Esophagus muscularis mucosa (tissue), 4 donors: ENCODE measurements at regions of chr4 and their contacts with region 1.

Region 1: GRCh38 chr4:122932763-122933162 is 10.4 kb upstream of the NUDT6 start:
- DNase-seq: no peak
- H3K4me3 ChIP-seq: no peak overlapping the region
- H3K27ac ChIP-seq: no peak overlapping the region
- H3K4me1 ChIP-seq: no peaks in the 10 kb centered on the region
- H3K27me3 ChIP-seq: no peaks in the 10 kb centered on the region
- CTCF ChIP-seq: no peak
- EP300 ChIP-seq: no peak
- POLR2A ChIP-seq: no peak

Region 2: DNA sequence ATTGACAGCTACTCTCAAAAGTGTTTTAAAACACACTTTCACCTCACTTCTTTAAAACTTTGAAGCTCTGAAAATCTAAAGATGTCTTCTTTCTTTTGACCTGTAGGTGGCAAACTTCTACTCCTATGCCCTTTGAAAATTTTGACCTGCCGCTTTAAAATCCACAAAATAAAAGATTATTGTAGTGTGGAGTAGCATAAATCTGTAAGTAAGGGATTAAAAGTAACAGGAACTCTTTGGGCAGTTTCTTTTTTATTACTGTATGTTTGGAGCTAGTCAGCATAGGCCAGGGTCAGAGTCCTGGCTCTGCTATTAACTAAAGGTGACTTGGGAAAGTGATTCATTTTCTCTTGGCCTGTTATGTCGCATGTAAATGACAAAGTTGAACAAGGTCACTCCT is 174.7 kb before region 1 on chr4:
- intact Hi-C with region 1: loop called (anchors 2 kb)
- DNase-seq: no peak
- H3K4me3 ChIP-seq: no peak overlapping the region
- H3K27ac ChIP-seq: no peak overlapping the region
- H3K4me1 ChIP-seq: peaks cover 4 to 7% (median 4%) of the 10 kb centered on the region in 4 donors
- H3K27me3 ChIP-seq: no peaks in the 10 kb centered on the region
- CTCF ChIP-seq: peak; percentile 63 to 77 (median 73)
- EP300 ChIP-seq: no peak
- POLR2A ChIP-seq: no peak

Region 3: DNA sequence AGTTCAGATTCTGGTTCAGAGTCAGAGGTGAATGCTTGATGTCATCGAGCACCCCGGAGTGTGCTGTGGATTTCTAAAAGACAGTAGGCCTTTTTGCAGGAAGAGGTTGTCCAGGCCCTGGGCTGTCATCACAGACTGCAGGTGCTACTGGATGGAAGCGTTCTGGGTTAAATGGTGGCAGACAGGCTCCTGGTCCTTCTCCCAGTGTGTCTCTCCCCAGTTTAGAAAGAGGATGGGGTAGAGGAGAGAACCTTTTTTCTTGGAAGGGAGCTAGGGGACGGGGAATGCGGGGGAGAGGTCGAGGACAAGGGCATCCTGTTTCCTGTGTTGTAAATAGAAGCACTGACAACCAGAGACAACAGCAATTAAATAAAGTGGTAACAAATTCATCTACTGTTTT is 91.9 kb after region 1 on chr4:
- intact Hi-C with region 1: no loop called
- DNase-seq: no peak
- H3K4me3 ChIP-seq: no peak overlapping the region
- H3K27ac ChIP-seq: no peak overlapping the region
- H3K4me1 ChIP-seq: peaks cover 0 to 8% (median 3%) of the 10 kb centered on the region in 4 donors
- H3K27me3 ChIP-seq: no peaks in the 10 kb centered on the region
- CTCF ChIP-seq: no peak
- EP300 ChIP-seq: no peak
- POLR2A ChIP-seq: no peak